ENCODE measurements at regions of chr7 and their contacts with region 1.

Region 1: DNA sequence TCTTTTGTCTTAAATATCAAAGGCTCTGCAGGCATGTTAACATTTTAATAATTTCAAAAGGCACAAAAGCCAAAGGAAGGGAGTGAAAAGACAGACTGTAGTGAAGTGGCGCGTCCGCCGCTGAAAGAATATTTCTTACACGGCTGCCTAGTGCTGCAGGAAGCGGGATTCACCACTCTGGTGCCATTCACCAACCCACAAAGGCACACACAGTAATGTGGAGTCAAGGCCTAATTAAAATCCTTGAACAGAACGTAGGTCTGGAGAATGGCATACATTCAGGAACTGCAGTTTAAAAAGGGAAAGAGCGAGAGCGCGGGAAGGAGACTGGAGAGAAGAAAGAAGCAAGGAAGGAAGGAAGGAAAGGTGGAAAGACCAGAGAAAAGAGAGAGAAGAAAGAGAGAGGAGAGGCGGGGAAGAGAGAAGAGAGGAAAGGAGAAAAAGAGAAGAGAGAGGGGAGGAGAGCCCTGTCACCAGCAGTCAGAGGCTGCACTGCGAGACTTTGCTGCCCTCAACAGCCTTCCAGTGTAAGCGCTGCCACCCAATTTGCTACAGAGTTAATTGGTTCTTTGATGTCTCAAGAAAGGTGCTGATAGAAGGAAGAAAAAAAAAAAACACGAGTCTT is 554.0 kb downstream of the MDFIC start:
- DNase-seq: no peak
- H3K4me3 ChIP-seq: no peak overlapping the region
- H3K27ac ChIP-seq: no peak overlapping the region
- H3K4me1 ChIP-seq: peaks cover 6% of the 10 kb centered on the region
- H3K27me3 ChIP-seq: peaks cover 7 to 19% of the 10 kb centered on the region in 2 experiments
- CTCF ChIP-seq: no peak
- POLR2A ChIP-seq: no peak

Region 2: GRCh38 chr7:114922016-114922651 is 553.7 kb before region 1 on chr7 and contains the start of gene MDFIC:
- CTCF ChIA-PET with region 1: no interaction called
- POLR2A ChIA-PET with region 1: interaction called, 3 read pairs
- dilution Hi-C with region 1: no loop called
- intact Hi-C with region 1: loop called (anchors 10 kb)
- DNase-seq: peak; percentile 47
- H3K4me3 ChIP-seq: peak within 1 kb of the TSS; percentile 60 to 96 (median 73)
- H3K27ac ChIP-seq: peak within 1 kb of the TSS; percentile 58
- H3K4me1 ChIP-seq: peaks cover 3% of the 10 kb centered on the region
- H3K27me3 ChIP-seq: peaks cover 0 to 2% of the 10 kb centered on the region in 2 experiments
- CTCF ChIP-seq: no peak
- POLR2A ChIP-seq: peak; percentile 62
- total RNA-seq, gene MDFIC: 13.7 and 14.2 TPM in 2 replicates

Region 3: DNA sequence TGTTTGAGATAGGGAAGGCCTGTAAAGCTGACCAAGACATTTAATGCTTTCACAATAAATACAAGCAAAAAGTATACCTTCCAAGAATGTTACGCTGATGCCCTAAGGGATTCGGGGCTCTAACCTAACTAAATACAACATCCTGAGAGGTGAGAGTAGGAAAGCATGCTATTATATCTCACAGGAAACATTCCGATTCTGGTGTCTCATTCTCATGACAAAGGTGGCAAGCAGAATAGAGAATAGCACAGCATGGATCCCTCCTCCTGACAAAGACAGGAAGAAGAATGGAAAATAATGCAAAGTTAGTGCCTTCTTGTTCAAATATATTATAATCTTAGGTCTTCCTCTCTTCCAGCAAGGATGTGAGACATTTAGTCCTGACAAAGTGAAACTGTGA is 50.4 kb after region 1 on chr7:
- CTCF ChIA-PET with region 1: no interaction called
- POLR2A ChIA-PET with region 1: no interaction called
- dilution Hi-C with region 1: no loop called
- intact Hi-C with region 1: no loop called
- DNase-seq: no peak
- H3K4me3 ChIP-seq: no peak overlapping the region
- H3K27ac ChIP-seq: no peak overlapping the region
- H3K4me1 ChIP-seq: no peaks in the 10 kb centered on the region
- H3K27me3 ChIP-seq: no peaks in the 10 kb centered on the region
- CTCF ChIP-seq: no peak
- POLR2A ChIP-seq: no peak

Measured in endothelial cell of umbilical vein (primary cell).